BJ (cell line): ENCODE measurements at regions of chr12 and their contacts with region 1.

Region 1: GRCh38 chr12:6285063-6285477 is 25.4 kb upstream of the PLEKHG6 start:
- DNase-seq: no peak
- H3K4me3 ChIP-seq: no peak overlapping the region
- H3K27me3 ChIP-seq: no peaks in the 10 kb centered on the region
- CTCF ChIP-seq: peak; percentile 90

Region 2: GRCh38 chr12:6039894-6040568 is 245.0 kb before region 1 on chr12:
- CTCF ChIA-PET with region 1: interaction called, 17 read pairs
- POLR2A ChIA-PET with region 1: no interaction called
- DNase-seq: no peak
- H3K4me3 ChIP-seq: no peak overlapping the region
- H3K27me3 ChIP-seq: peaks cover 2% of the 10 kb centered on the region
- CTCF ChIP-seq: peak; percentile 92

Region 3: GRCh38 chr12:6056406-6057240 is 228.4 kb before region 1 on chr12:
- CTCF ChIA-PET with region 1: interaction called, 13 read pairs
- POLR2A ChIA-PET with region 1: no interaction called
- DNase-seq: no peak
- H3K4me3 ChIP-seq: no peak overlapping the region
- H3K27me3 ChIP-seq: no peaks in the 10 kb centered on the region
- CTCF ChIP-seq: peak; percentile 42

Region 4: GRCh38 chr12:6062757-6063735 is 222.0 kb before region 1 on chr12:
- CTCF ChIA-PET with region 1: interaction called, 38 read pairs
- POLR2A ChIA-PET with region 1: no interaction called
- DNase-seq: no peak
- H3K4me3 ChIP-seq: no peak overlapping the region
- H3K27me3 ChIP-seq: no peaks in the 10 kb centered on the region; the same call in 1 of the 2 replicates
- CTCF ChIP-seq: peak; percentile 98

Region 5: DNA sequence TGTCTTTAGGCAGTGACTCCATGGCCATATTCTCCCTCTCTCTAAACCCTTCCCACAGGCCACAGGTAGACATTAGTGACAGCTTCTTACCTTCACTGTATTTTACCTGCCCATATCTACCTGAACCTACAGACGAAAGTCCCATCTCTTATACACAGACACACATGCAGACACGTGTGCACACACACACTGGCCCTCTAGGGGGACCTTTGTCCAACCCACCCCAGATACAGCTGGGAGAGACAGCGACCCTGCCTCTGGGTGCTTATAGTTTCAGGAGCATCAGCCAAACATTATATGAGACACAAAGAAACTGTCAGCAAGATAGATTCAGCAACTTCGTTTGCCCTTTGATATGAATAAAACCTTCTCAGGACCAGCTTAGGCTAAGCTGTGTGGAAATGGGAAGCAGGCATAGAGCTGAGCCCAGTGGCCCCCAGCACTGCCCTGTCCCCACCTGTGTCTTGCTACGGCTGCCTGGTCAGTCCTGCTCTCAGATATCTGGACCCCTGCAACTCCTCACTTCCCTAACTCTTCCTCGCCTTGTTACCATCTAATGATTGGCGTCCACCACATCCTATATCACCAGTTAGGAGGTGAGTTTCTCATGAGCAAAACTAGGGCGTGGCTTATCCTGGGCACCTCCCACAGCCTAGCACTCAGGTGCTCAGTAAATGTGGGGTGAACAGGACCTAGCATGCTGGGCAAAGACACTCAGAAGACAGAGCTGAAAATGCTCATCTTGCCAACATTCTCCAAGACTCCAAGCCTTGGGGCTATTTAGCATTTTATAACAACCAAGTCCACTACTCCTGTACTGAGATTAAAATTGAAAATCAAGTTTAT is 96.9 kb before region 1 on chr12:
- CTCF ChIA-PET with region 1: interaction called, 109 read pairs
- POLR2A ChIA-PET with region 1: no interaction called
- DNase-seq: no peak
- H3K4me3 ChIP-seq: no peak overlapping the region
- H3K27me3 ChIP-seq: peaks cover 1% of the 10 kb centered on the region; the same call in 1 of the 2 replicates
- CTCF ChIP-seq: no peak